CD4-positive, alpha-beta memory T cell (primary cell): ENCODE measurements at regions of chr2 and their contacts with region 1.

Region 1: DNA sequence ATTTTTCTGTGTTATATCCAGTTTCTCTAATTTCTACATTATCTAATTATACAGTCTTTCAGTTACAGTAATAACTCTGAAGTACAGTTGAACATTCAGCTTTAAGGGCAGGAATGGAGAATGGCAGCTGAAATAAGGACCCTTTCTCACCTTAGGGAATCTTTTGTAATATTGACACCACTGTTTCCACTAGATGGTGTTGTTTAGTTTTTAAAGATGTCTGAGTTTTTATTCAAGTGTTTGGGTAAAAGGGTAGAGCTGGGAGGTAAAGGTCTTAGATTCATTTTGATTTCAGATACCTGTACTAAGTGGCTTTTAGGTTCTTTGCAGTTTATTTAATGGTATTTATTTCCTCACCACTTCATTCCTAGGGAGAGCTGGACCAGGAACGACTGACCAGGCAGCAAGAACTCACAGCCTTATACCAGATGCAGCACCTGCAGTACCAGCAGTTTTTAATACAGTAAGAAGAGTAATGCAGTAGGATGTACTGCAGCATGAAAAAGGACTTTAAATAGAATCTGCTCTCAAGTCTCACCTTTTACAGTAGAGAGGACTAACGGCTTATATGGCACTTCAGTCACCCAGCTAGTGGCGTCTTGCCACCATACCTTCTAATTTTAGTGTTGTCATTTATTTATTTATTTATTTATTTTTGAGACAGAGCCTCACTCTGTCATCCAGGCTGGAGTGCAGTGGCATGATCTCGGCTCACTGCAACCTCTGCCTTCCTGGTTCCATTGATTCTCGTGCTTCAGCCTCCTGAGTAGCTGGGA is 33.2 kb upstream of the KCNJ13 start:
- DNase-seq: peak in 1 of 5 donors; percentile 4
- H3K4me3 ChIP-seq: no peak overlapping the region
- H3K4me3 Mint-ChIP-seq: peak overlapping the region in 1 of 8 donors; percentile 24
- H3K27ac ChIP-seq: no peak overlapping the region
- H3K27ac Mint-ChIP-seq: peak overlapping the region in 2 of 7 donors; percentile 12 to 21
- H3K4me1 ChIP-seq: no peaks in the 10 kb centered on the region
- H3K4me1 Mint-ChIP-seq: peaks cover 0 to 4% (median under 1%) of the 10 kb centered on the region in 4 donors
- H3K27me3 ChIP-seq: no peaks in the 10 kb centered on the region
- H3K27me3 Mint-ChIP-seq: no peaks in the 10 kb centered on the region

Region 2: GRCh38 chr2:232689152-232689910 is 120.2 kb before region 1 on chr2:
- CTCF ChIA-PET with region 1: no interaction called
- POLR2A ChIA-PET with region 1: no interaction called
- intact Hi-C with region 1: no loop called
- DNase-seq: no peak
- H3K4me3 ChIP-seq: no peak overlapping the region
- H3K4me3 Mint-ChIP-seq: no peak overlapping the region
- H3K27ac ChIP-seq: no peak overlapping the region
- H3K27ac Mint-ChIP-seq: no peak overlapping the region
- H3K4me1 ChIP-seq: no peaks in the 10 kb centered on the region
- H3K4me1 Mint-ChIP-seq: peaks cover 0 to 1% (median 0%) of the 10 kb centered on the region in 4 donors
- H3K27me3 ChIP-seq: no peaks in the 10 kb centered on the region
- H3K27me3 Mint-ChIP-seq: no peaks in the 10 kb centered on the region

Region 3: GRCh38 chr2:233029321-233029720 is 219.8 kb after region 1 on chr2:
- CTCF ChIA-PET with region 1: interaction called, 12 read pairs
- POLR2A ChIA-PET with region 1: no interaction called
- intact Hi-C with region 1: no loop called
- DNase-seq: no peak
- H3K4me3 ChIP-seq: no peak overlapping the region
- H3K4me3 Mint-ChIP-seq: no peak overlapping the region
- H3K27ac ChIP-seq: no peak overlapping the region
- H3K27ac Mint-ChIP-seq: peak overlapping the region in 1 of 7 donors; percentile 20
- H3K4me1 ChIP-seq: no peaks in the 10 kb centered on the region
- H3K4me1 Mint-ChIP-seq: no peaks in the 10 kb centered on the region
- H3K27me3 ChIP-seq: no peaks in the 10 kb centered on the region
- H3K27me3 Mint-ChIP-seq: no peaks in the 10 kb centered on the region